ENCODE measurements at regions of chr1 and their contacts with region 1.

Region 1: GRCh38 chr1:223748773-223749733 is 36.7 kb downstream of the CAPN2 start:
- DNase-seq: no peak
- ATAC-seq: peak; percentile 85
- H3K4me3 ChIP-seq: no peak overlapping the region
- H3K27ac ChIP-seq: no peak overlapping the region
- H3K4me1 ChIP-seq: no peaks in the 10 kb centered on the region
- H3K27me3 ChIP-seq: no peaks in the 10 kb centered on the region
- CTCF ChIP-seq: peak; percentile 73 to 91 (median 90); a peak in 5 of 6 replicates
- POLR2A ChIP-seq: no peak
- RAD21 ChIP-seq: peak; percentile 77

Region 2: DNA sequence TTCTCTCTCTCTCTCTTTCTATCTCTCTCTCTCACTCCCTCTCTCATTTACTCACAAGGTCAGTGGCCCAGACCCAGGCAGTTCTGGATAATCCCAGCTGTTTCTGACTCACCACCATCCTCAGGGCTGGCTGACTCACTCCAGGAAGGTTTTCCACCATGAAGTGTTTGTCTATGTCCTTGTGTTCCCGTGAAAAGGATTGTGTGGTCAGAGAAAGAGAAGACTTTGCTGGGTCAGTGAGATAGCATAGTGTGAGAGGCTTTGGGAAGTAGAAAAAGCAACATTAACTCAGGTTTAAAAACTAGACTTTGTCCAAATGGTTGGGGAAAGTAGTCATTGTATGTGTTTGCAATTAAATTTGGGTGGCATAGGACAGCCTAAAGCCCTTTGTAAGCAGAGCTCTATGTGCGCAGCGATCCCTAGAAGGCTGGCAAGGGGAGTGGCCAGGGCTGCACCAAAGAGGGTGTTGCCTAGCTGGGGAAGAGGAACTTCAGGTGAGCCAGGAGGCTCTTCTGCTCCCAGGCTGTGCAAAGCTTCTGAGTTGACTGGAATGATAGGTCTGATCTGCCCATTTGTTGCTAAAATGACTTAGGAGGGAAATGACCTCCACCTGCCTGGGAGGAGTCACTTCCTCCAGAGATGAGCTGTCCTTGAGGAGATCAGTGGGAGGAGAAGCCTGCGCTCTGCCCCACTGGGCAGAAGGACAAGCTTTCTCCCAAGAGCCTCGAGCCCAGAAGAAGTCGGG is 41.6 kb before region 1 on chr1:
- CTCF ChIA-PET with region 1: interaction called, 15 read pairs
- POLR2A ChIA-PET with region 1: no interaction called
- RAD21 ChIA-PET with region 1: interaction called in 1 of 2 experiments, 3 read pairs
- intact Hi-C with region 1: no loop called
- DNase-seq: peak; percentile 93
- ATAC-seq: peak; percentile 79
- H3K4me3 ChIP-seq: peak overlapping the region; percentile 34 to 48
- H3K27ac ChIP-seq: peak overlapping the region; percentile 84
- H3K4me1 ChIP-seq: peaks cover 57 to 94% of the 10 kb centered on the region in 2 experiments
- H3K27me3 ChIP-seq: no peaks in the 10 kb centered on the region
- CTCF ChIP-seq: no peak
- POLR2A ChIP-seq: no peak
- RAD21 ChIP-seq: no peak

Region 3: DNA sequence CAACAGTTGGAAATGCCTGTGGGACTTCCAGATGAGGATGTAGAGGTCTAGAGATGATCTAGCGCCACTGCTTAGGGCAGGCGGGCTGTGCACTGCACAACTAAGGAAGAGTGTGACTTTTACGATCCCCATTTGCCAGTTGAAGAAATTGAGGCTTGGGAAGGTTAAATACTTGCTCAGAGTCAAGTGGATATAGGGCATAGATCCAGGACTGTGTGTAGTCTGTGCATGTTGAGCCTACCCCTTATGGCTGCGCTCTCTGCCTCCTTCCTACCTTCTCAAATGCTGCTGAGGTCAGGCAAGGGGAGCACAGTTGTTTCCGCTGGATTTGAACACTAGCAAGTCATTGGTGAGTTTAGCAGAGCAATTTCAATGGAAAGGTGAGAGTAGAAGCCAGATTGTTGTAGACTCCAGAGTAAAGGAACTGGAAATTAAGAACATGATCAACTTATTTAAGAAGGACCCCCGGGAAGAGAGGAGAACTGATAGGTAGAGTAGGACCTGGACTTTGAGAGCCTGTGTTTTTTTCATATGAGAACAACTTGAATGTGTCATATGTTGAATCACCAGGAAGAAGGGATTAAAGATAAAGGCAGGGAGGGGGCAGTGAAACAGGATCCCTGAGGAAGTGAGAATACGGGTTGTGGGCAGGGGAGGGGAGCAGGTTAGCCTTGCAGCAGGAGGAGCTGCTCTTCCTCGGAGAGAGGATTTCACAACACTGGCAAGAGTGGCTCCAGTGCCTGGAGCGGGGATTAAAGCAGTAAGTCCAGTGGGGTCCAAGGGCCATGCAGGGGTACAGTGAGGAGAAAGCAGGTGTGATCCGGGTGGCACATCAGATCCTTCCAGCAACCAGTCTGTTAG is 34.0 kb before region 1 on chr1:
- CTCF ChIA-PET with region 1: interaction called, 8 read pairs
- POLR2A ChIA-PET with region 1: no interaction called
- RAD21 ChIA-PET with region 1: no interaction called
- intact Hi-C with region 1: loop called (anchors 2 kb)
- DNase-seq: peak; percentile 66
- ATAC-seq: peak; percentile 36
- H3K4me3 ChIP-seq: peak overlapping the region; percentile 34 to 81
- H3K27ac ChIP-seq: peak overlapping the region; percentile 96
- H3K4me1 ChIP-seq: peaks cover 45 to 85% of the 10 kb centered on the region in 2 experiments
- H3K27me3 ChIP-seq: no peaks in the 10 kb centered on the region
- CTCF ChIP-seq: 0 out of 6 replicates have a peak, but pooled peaks of 1 of the 3 experiments have one; percentile 6
- POLR2A ChIP-seq: no peak
- RAD21 ChIP-seq: no peak

Region 4: DNA sequence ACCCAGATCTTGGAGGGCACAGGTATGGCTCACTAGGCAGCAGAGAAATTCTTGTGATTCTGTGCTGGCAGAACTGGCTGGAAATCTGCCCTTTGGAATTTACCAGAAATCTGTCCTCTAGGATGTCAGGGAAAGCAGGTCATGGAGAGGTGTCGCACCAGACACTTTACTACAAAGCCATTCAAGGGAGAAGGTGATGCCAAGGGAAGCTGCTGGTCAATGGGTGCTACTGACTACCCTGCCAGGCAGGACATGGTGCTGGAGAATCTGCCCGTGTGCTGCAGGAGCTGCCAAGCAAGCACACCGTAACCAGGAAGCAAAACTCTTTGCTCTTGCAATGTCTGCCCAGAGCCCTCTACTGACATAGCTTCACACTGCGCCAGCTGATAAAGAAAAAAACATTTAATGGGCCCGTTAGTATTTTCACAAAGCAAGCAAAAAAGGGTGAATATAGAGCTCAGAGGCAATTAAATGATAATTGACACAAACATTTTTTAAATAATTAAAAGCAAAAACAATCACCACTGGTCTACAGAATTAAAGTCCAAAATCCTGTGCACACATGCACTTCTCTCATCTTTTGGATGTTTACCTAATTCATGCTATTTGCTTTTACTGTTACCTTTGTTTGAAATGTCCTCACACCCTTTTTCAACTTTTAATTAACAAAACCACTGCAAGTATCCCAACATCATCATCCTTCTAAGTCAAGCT is 357.7 kb after region 1 on chr1:
- CTCF ChIA-PET with region 1: no interaction called
- POLR2A ChIA-PET with region 1: no interaction called
- RAD21 ChIA-PET with region 1: no interaction called
- intact Hi-C with region 1: no loop called
- DNase-seq: peak; percentile 48
- ATAC-seq: peak; percentile 99
- H3K4me3 ChIP-seq: no peak overlapping the region
- H3K27ac ChIP-seq: peak overlapping the region; percentile 33; the same call in 1 of the 2 replicates
- H3K4me1 ChIP-seq: peaks cover 6% of the 10 kb centered on the region in 2 experiments
- H3K27me3 ChIP-seq: no peaks in the 10 kb centered on the region
- CTCF ChIP-seq: peak; percentile 42 to 59 (median 52); a peak in 5 of 6 replicates
- POLR2A ChIP-seq: no peak
- RAD21 ChIP-seq: peak; percentile 76

Measured in HCT116 (cell line).